ENCODE measurements at regions of chr9 and their contacts with region 1.

Region 1: DNA sequence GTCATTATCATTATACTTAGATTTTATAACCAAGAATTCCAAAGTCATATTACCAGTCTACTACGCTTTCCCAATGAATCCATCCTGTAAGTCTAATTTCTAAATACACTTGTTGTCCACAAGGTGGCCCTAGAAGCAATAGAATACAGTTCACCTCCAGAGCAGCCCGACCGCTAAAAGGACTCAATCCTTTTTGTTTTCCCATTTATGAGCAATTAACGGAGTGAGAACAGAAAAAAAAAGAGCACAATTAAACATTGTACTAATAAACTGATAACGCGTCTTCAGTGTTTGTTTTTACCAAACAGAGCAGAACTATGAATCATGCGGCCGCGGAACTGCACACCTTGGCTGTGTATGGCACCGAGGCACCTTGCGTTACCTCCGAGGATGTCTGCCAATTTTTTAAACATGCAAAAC is 160.7 kb upstream of the DAPK1 start:
- DNase-seq: peak; percentile 42 to 65 (median 47)
- H3K4me3 ChIP-seq: peak overlapping the region; percentile 37
- H3K27ac ChIP-seq: no peak overlapping the region
- H3K4me1 ChIP-seq: no peaks in the 10 kb centered on the region
- H3K27me3 ChIP-seq: no peaks in the 10 kb centered on the region
- CTCF ChIP-seq: peak; percentile 9 to 90 (median 85)
- EP300 ChIP-seq: no peak
- POLR2A ChIP-seq: no peak

Region 2: GRCh38 chr9:86687788-86688187 is 649.1 kb before region 1 on chr9:
- intact Hi-C with region 1: no loop called
- DNase-seq: no peak
- H3K4me3 ChIP-seq: no peak overlapping the region
- H3K27ac ChIP-seq: no peak overlapping the region
- H3K4me1 ChIP-seq: no peaks in the 10 kb centered on the region
- H3K27me3 ChIP-seq: no peaks in the 10 kb centered on the region
- CTCF ChIP-seq: no peak
- EP300 ChIP-seq: no peak
- POLR2A ChIP-seq: no peak

Region 3: GRCh38 chr9:87179573-87180340 is 157.2 kb before region 1 on chr9:
- intact Hi-C with region 1: no loop called
- DNase-seq: no peak
- H3K4me3 ChIP-seq: no peak overlapping the region
- H3K27ac ChIP-seq: no peak overlapping the region
- H3K4me1 ChIP-seq: peaks cover 4% of the 10 kb centered on the region
- H3K27me3 ChIP-seq: no peaks in the 10 kb centered on the region
- CTCF ChIP-seq: no peak
- EP300 ChIP-seq: no peak
- POLR2A ChIP-seq: no peak

Region 4: GRCh38 chr9:87516222-87516925 is 179.4 kb after region 1 on chr9:
- intact Hi-C with region 1: no loop called
- DNase-seq: peak in 4 of 5 donors; percentile 43 to 72 (median 58)
- H3K4me3 ChIP-seq: no peak overlapping the region
- H3K27ac ChIP-seq: no peak overlapping the region
- H3K4me1 ChIP-seq: peaks cover 21% of the 10 kb centered on the region
- H3K27me3 ChIP-seq: no peaks in the 10 kb centered on the region
- CTCF ChIP-seq: no peak
- EP300 ChIP-seq: no peak
- POLR2A ChIP-seq: no peak

Region 5: DNA sequence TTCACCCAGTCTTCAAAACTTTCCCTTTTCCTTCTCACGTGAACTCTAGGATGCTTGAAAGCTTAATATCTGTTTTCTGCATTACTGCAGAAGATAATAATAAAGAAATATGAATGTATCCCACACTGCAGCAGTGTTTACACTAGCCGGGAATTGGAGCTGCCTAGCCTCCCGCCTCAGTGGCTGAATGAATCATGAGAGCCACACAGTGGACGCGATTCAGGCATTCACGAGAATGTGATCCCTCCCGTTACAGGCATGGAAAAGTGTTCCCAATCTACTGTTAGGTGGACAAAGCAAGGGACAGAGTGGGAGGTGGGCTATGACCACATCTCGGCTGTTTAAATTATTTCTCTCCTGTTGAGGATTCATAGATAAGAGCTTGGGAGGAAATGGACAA is 319.6 kb after region 1 on chr9:
- intact Hi-C with region 1: loop called (anchors 5 kb)
- DNase-seq: peak in 2 of 5 donors; percentile 57 to 63
- H3K4me3 ChIP-seq: no peak overlapping the region
- H3K27ac ChIP-seq: no peak overlapping the region
- H3K4me1 ChIP-seq: peaks cover 5% of the 10 kb centered on the region
- H3K27me3 ChIP-seq: no peaks in the 10 kb centered on the region
- CTCF ChIP-seq: peak in 1 of 3 donors; percentile 6
- EP300 ChIP-seq: no peak
- POLR2A ChIP-seq: no peak

Region 6: DNA sequence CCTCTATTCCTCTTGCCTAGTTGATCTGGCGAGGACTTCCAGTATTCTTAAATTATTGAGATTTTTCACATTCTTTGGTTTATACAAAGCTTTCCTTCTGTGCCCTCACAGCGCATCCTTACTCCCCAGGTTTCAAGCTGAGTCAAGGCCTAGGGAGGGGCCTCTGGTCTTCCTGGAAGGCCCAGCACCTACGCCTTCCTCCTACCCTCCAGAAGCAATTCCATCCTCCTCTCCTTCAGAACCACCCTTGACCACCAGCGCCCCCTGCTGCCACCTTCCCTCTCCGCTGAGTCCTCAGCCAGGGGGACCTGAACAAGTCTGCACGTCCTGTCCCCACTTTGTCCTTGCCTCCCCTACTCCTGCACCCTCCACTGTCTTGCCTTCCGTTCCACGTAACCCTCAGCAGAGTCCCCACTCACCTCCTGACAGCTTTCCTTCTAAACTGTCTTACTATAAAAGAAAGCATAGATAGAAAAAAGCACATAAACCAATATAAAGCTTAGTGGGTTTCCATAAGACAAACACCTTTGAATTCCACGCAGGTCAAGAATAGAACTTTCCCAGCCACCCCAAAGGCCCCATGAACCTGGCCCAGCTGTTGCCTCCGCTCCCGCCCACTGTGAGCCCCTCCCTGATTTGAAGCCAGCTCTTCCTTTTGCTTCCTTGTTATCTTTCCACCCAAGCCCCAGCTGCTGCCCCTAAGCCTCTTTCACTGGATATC is 326.0 kb after region 1 on chr9:
- intact Hi-C with region 1: loop called (anchors 5 kb)
- DNase-seq: peak; percentile 65 to 84 (median 80)
- H3K4me3 ChIP-seq: no peak overlapping the region
- H3K27ac ChIP-seq: no peak overlapping the region
- H3K4me1 ChIP-seq: peaks cover 3% of the 10 kb centered on the region
- H3K27me3 ChIP-seq: no peaks in the 10 kb centered on the region
- CTCF ChIP-seq: peak in 2 of 3 donors; percentile 53 to 66
- EP300 ChIP-seq: no peak
- POLR2A ChIP-seq: peak; percentile 12

Region 7: GRCh38 chr9:87803622-87804345 is 466.9 kb after region 1 on chr9:
- intact Hi-C with region 1: loop called in 1 of 4 experiments (anchors 10 kb)
- DNase-seq: no peak
- H3K4me3 ChIP-seq: no peak overlapping the region
- H3K27ac ChIP-seq: no peak overlapping the region
- H3K4me1 ChIP-seq: no peaks in the 10 kb centered on the region
- H3K27me3 ChIP-seq: no peaks in the 10 kb centered on the region
- CTCF ChIP-seq: no peak
- EP300 ChIP-seq: no peak
- POLR2A ChIP-seq: no peak